Vagina (tissue), 2 donors: ENCODE measurements at regions of chr6 and their contacts with region 1.

Region 1: GRCh38 chr6:94362061-94362864 is 942.9 kb upstream of the EPHA7 start:
- DNase-seq: no peak
- H3K4me3 ChIP-seq: no peak overlapping the region
- H3K27ac ChIP-seq: no peak overlapping the region
- H3K4me1 ChIP-seq: no peaks in the 10 kb centered on the region
- H3K27me3 ChIP-seq: no peaks in the 10 kb centered on the region
- CTCF ChIP-seq: no peak
- POLR2A ChIP-seq: no peak

Region 2: GRCh38 chr6:94424692-94425091 is 62.4 kb after region 1 on chr6:
- intact Hi-C with region 1: no loop called
- DNase-seq: no peak
- H3K4me3 ChIP-seq: no peak overlapping the region
- H3K27ac ChIP-seq: no peak overlapping the region
- H3K4me1 ChIP-seq: no peaks in the 10 kb centered on the region
- H3K27me3 ChIP-seq: no peaks in the 10 kb centered on the region
- CTCF ChIP-seq: no peak
- POLR2A ChIP-seq: no peak

Region 3: DNA sequence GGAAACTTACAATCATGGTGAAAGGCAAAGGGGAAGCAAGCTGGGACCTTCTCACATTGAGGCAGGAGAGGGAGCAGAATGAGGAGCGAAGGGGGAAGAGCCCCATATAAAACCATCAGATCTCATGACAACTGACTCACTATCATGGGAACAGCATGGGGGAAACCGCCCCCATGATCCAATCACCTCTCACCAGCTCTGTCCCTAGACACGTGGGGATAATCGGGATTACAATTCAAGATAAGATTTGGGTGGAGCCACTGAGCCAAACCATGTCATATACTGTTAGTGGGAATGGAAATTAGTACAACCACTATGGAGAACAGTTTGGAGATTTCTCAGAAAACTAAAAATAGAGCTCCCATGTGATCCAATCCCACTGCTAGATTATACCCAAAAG is 1378.8 kb after region 1 on chr6:
- intact Hi-C with region 1: loop called (anchors 5 kb)
- DNase-seq: no peak
- H3K4me3 ChIP-seq: no peak overlapping the region
- H3K27ac ChIP-seq: no peak overlapping the region
- H3K4me1 ChIP-seq: no peaks in the 10 kb centered on the region
- H3K27me3 ChIP-seq: no peaks in the 10 kb centered on the region
- CTCF ChIP-seq: no peak
- POLR2A ChIP-seq: no peak